Right ventricle myocardium superior (tissue), 1 donor: ENCODE measurements at regions of chr20 and their contacts with region 1.

Region 1: DNA sequence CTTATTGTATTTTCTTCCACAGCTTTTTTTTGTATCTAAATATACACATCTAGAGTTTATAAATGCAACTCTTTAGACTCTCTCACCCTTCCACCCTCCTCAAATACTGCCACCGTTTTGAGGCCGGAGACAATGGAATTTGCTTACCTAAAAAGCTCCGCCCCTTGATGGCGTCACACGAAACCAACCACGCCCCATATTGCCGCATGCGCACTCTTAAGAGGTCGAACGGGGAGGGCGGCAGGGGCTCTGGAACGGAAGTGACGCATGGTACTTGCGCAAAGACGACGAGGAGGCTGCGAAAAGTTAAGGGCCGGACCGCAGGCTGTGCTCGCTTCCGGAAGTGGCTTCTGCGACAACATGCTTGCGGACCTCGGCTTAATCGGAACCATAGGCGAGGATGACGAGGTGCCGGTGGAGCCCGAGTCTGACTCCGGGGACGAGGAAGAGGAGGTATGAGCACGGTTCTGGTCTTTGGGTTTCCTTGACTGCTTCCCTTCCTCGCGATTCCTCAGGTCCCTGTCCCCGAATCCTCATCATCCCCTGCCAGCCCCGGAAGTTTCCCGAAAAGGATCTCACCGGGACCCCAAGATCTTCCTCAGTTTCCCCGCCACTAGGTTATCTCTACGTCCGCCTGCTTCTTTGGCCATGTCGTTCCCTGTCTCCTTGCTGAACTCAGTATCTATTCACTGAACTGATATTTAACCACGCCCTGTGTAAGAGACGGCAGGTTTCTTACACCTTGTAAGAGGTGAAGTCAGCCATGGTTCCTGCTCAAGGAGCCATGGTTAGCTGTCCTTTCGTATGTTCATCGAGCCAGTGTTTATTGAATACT is at the start of gene DDX27:
- DNase-seq: peak; percentile 97
- ATAC-seq: peak; percentile 98
- total RNA-seq, gene DDX27: 12.2 TPM

Region 2: GRCh38 chr20:49132995-49133478 is 86.3 kb before region 1 on chr20:
- intact Hi-C with region 1: loop called (anchors 2 kb)
- DNase-seq: no peak
- ATAC-seq: peak; percentile 86

Region 3: DNA sequence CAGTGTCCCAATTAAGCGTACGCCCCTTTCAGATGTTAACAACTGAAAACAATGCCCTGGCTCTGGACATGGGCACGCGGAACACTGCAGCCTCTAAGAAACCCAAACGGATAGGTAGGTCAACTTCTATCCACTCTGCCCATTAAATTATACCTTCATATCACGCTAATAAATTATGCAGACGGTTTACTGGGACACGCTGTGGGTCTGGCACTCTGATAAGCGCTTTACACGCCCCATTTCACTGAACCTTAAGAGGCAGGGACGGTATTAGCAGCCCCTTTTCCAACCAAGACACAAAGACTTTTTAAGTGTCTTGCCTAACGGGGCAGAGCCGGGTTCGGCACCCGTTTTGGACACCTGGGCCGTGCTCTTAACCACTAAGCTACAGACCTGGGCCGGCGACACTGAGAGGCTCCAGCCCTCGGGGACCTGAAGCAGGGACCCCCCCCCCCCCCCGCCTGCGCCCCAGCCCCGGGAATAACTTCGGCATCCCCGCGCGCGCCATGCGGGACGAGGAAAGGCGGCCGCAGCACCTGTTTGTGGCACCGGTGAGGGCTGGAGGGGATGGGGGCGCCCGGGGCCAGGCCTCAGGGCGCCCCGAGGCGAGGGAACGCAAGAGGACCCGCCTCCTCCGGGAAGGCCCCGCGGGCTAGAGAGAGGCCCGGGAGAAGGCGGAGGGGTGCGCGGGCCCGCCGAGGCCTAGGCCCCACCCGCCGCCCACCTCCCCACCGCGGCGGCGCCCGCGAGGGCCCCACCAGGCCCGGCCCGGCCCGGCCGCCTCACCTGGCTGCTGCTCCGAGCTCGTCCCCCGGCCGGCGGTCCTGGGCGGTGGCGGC is 31.8 kb before region 1 on chr20:
- intact Hi-C with region 1: loop called (anchors 2 kb)
- DNase-seq: peak; percentile 44
- ATAC-seq: peak; percentile 0